ENCODE measurements at regions of chr16 and their contacts with region 1.

Region 1: GRCh38 chr16:117379-118365 is 20.8 kb downstream of the NPRL3 start:
- DNase-seq: peak in 3 of 5 donors; percentile 40 to 57 (median 48)
- ATAC-seq: peak; percentile 55 to 68 (median 64)
- H3K4me3 ChIP-seq: no peak overlapping the region
- H3K27ac ChIP-seq: no peak overlapping the region
- H3K4me1 ChIP-seq: peaks cover 0 to 18% (median 0%) of the 10 kb centered on the region in 12 donors
- H3K27me3 ChIP-seq: no peaks in the 10 kb centered on the region
- CTCF ChIP-seq: peak; percentile 43 to 74 (median 59)
- POLR2A ChIP-seq: no peak

Region 2: GRCh38 chr16:180938-181667 is 63.4 kb after region 1 on chr16:
- intact Hi-C with region 1: loop called in 4 of 10 experiments (anchors 5 kb)
- DNase-seq: peak; percentile 56 to 87 (median 67)
- ATAC-seq: peak in 3 of 4 donors; percentile 76 to 80 (median 79)
- H3K4me3 ChIP-seq: peak overlapping the region in 11 of 12 donors; percentile 6 to 45 (median 38)
- H3K27ac ChIP-seq: no peak overlapping the region
- H3K4me1 ChIP-seq: peaks cover 7 to 26% (median 12%) of the 10 kb centered on the region in 12 donors
- H3K27me3 ChIP-seq: peaks cover 25 to 44% (median 33%) of the 10 kb centered on the region in 9 donors
- CTCF ChIP-seq: peak; percentile 90 to 98 (median 94)
- POLR2A ChIP-seq: no peak

Region 3: GRCh38 chr16:361872-362701 is 244.4 kb after region 1 on chr16:
- intact Hi-C with region 1: loop called in 5 of 10 experiments (anchors 2 to 5 kb)
- DNase-seq: peak; percentile 68 to 86 (median 73)
- ATAC-seq: peak; percentile 68 to 88 (median 79)
- H3K4me3 ChIP-seq: no peak overlapping the region
- H3K27ac ChIP-seq: no peak overlapping the region
- H3K4me1 ChIP-seq: no peaks in the 10 kb centered on the region
- H3K27me3 ChIP-seq: peaks cover 0 to 6% (median 0%) of the 10 kb centered on the region in 9 donors
- CTCF ChIP-seq: peak; percentile 53 to 79 (median 70)
- POLR2A ChIP-seq: no peak

Measured in heart left ventricle (tissue), 16 donors.